A673 (cell line): ENCODE measurements at regions of chr1 and their contacts with region 1.

Region 1: GRCh38 chr1:198756470-198756869 is 117.6 kb downstream of the PTPRC start:
- DNase-seq: peak; percentile 67
- H3K4me3 ChIP-seq: no peak overlapping the region
- H3K27ac ChIP-seq: peak overlapping the region; percentile 29
- H3K4me1 ChIP-seq: peaks cover 27% of the 10 kb centered on the region
- H3K27me3 ChIP-seq: no peaks in the 10 kb centered on the region
- CTCF ChIP-seq: peak; percentile 62

Region 2: DNA sequence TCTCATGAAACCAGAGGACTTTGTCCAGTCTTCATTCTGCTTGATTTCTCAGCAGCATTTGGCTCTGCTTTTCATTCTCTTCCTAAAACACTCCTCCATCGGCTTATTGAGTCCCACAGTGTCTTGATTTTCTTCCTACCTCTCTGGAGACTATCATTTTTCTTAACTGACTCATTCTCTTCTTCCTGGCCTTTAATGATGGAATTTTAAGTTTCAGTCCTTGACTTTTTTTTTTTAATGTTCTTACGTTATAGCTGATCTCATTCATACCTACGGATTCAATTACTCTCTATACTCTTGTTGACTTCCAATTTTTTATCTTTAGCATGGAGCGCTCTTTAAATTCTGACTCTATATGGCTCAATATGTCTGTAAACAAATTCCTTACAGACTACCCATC is 488.5 kb before region 1 on chr1:
- CTCF ChIA-PET with region 1: no interaction called
- POLR2A ChIA-PET with region 1: no interaction called
- intact Hi-C with region 1: no loop called
- DNase-seq: no peak
- H3K4me3 ChIP-seq: no peak overlapping the region
- H3K27ac ChIP-seq: no peak overlapping the region
- H3K4me1 ChIP-seq: peaks cover 13% of the 10 kb centered on the region
- H3K27me3 ChIP-seq: no peaks in the 10 kb centered on the region
- CTCF ChIP-seq: no peak

Region 3: GRCh38 chr1:198520524-198521254 is 235.8 kb before region 1 on chr1:
- CTCF ChIA-PET with region 1: no interaction called
- POLR2A ChIA-PET with region 1: no interaction called
- intact Hi-C with region 1: no loop called
- DNase-seq: no peak
- H3K4me3 ChIP-seq: no peak overlapping the region
- H3K27ac ChIP-seq: peak overlapping the region; percentile 57
- H3K4me1 ChIP-seq: peaks cover 50% of the 10 kb centered on the region
- H3K27me3 ChIP-seq: no peaks in the 10 kb centered on the region
- CTCF ChIP-seq: no peak

Region 4: DNA sequence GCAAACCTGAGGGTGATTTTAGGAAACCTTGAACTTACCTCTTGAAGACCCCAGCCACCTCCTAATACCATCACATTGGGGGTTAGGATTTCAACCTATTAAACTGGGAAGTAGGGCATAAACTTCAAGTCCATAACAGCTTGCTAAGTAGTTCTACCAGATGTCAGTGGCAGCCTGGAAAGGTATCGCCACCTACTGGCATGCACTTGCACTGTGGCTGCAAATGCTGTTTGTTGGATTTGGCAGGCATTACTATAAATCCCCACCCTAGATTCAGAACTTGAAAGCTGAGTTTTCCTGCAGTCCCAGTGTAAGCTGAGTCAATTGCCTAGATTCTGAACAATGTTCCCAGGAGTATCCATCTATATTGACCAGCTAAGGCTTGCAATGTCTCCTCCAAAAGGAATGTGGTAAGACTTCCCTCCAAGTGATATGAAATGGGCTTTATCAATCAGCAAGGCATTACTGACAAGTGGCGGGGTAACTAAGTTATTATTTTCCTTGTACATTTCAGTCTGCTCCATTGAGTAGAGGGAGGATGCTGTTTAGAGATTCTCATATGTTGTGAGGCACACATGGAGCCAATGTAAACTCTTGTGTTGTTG is 356.9 kb after region 1 on chr1:
- CTCF ChIA-PET with region 1: no interaction called
- POLR2A ChIA-PET with region 1: no interaction called
- intact Hi-C with region 1: loop called (anchors 2 kb)
- DNase-seq: peak; percentile 85
- H3K4me3 ChIP-seq: no peak overlapping the region
- H3K27ac ChIP-seq: peak overlapping the region; percentile 34
- H3K4me1 ChIP-seq: no peaks in the 10 kb centered on the region
- H3K27me3 ChIP-seq: no peaks in the 10 kb centered on the region
- CTCF ChIP-seq: peak; percentile 91

Region 5: GRCh38 chr1:199551967-199552565 is 795.6 kb after region 1 on chr1:
- CTCF ChIA-PET with region 1: no interaction called
- POLR2A ChIA-PET with region 1: no interaction called
- intact Hi-C with region 1: loop called (anchors 1 kb)
- DNase-seq: peak; percentile 90
- H3K4me3 ChIP-seq: no peak overlapping the region
- H3K27ac ChIP-seq: peak overlapping the region; percentile 81
- H3K4me1 ChIP-seq: peaks cover 33% of the 10 kb centered on the region
- H3K27me3 ChIP-seq: no peaks in the 10 kb centered on the region
- CTCF ChIP-seq: peak; percentile 92

Region 6: DNA sequence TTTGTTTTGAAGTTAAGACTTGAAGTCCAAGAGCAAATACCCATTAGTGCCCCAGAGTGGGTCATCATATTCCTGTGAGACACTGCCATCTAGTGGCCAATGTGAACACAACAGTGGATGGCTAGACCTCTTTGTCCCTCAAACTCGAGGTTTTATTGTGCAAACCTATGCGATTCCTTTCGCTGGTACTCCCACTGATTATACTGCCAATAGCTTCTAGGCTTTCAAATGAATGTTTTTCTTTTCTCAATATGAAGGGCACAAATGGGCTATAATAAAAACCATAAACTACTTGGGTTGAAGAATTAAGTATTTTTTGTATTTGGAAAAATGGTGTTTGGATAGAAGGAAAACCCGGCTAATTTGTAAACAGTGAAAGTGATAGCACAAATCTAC is 1753.8 kb after region 1 on chr1:
- CTCF ChIA-PET with region 1: no interaction called
- POLR2A ChIA-PET with region 1: no interaction called
- intact Hi-C with region 1: loop called (anchors 5 kb)
- DNase-seq: peak; percentile 89
- H3K4me3 ChIP-seq: no peak overlapping the region
- H3K27ac ChIP-seq: no peak overlapping the region
- H3K4me1 ChIP-seq: no peaks in the 10 kb centered on the region
- H3K27me3 ChIP-seq: peaks cover 3% of the 10 kb centered on the region
- CTCF ChIP-seq: peak; percentile 96